PC-9 (cell line): ENCODE measurements at regions of chr7 and their contacts with region 1.

Region 1: GRCh38 chr7:152478140-152478539 is 42.3 kb upstream of the KMT2C start:
- DNase-seq: no peak
- H3K4me3 ChIP-seq: no peak overlapping the region
- H3K27ac ChIP-seq: no peak overlapping the region
- H3K4me1 ChIP-seq: no peaks in the 10 kb centered on the region
- H3K27me3 ChIP-seq: no peaks in the 10 kb centered on the region
- CTCF ChIP-seq: no peak

Region 2: GRCh38 chr7:152615031-152615741 is 137.0 kb after region 1 on chr7:
- CTCF ChIA-PET with region 1: no interaction called
- POLR2A ChIA-PET with region 1: interaction called, 12 read pairs
- intact Hi-C with region 1: no loop called
- DNase-seq: no peak
- H3K4me3 ChIP-seq: no peak overlapping the region
- H3K27ac ChIP-seq: no peak overlapping the region
- H3K4me1 ChIP-seq: no peaks in the 10 kb centered on the region
- H3K27me3 ChIP-seq: no peaks in the 10 kb centered on the region
- CTCF ChIP-seq: no peak

Region 3: GRCh38 chr7:152859781-152860191 is 381.6 kb after region 1 on chr7:
- CTCF ChIA-PET with region 1: no interaction called
- POLR2A ChIA-PET with region 1: no interaction called
- intact Hi-C with region 1: no loop called
- DNase-seq: no peak
- H3K4me3 ChIP-seq: no peak overlapping the region
- H3K27ac ChIP-seq: no peak overlapping the region
- H3K4me1 ChIP-seq: no peaks in the 10 kb centered on the region
- H3K27me3 ChIP-seq: no peaks in the 10 kb centered on the region; the same call in 1 of the 2 replicates
- CTCF ChIP-seq: peak; percentile 59; the same call in 1 of the 2 replicates